ENCODE measurements at regions of chr1 and their contacts with region 1.

Region 1: DNA sequence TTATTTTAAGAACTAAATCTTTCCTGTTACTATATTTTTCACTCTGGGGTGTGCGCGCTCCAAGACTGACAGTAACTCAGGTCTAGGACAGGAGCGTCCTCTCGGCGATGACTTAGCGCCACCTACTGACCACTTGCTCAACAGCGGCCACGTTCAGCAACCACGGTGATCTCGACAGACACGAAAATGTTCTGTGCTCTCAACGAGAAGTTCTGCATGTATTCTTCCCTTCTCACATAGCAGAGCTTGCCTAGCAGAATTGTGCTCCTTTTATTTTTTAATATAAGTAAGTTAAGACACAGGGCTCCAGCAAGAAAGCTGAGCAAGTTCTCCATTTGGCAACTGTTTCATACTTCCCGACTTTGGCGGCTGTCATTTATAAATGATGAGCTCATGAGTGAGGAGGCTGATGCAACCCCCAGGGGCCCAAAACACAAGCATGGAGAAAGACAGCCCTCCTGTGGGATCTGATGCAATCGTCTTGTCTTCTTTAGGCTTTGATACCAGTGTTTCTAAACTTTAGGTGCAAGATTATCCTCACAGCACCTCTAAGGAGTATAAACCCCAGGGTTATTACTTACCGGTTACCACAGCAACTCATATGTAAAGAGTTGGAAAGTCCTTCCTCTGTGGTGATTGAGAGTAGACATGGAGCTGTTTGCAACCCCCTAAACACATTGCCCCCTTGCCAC is 92.6 kb downstream of the HHIPL2 start:
- DNase-seq: peak; percentile 68
- H3K4me3 ChIP-seq: peak overlapping the region; percentile 3 to 5; a peak in 3 of 4 replicates
- H3K27ac ChIP-seq: peak overlapping the region in 1 of 2 experiments; percentile 67; a peak in 2 of 4 replicates
- H3K4me1 ChIP-seq: peaks cover 0 to 16% of the 10 kb centered on the region in 2 experiments; a peak in 2 of 4 replicates
- H3K27me3 ChIP-seq: no peaks in the 10 kb centered on the region
- CTCF ChIP-seq: peak; percentile 98
- EP300 ChIP-seq: no peak
- RAD21 ChIP-seq: peak; percentile 92

Region 2: DNA sequence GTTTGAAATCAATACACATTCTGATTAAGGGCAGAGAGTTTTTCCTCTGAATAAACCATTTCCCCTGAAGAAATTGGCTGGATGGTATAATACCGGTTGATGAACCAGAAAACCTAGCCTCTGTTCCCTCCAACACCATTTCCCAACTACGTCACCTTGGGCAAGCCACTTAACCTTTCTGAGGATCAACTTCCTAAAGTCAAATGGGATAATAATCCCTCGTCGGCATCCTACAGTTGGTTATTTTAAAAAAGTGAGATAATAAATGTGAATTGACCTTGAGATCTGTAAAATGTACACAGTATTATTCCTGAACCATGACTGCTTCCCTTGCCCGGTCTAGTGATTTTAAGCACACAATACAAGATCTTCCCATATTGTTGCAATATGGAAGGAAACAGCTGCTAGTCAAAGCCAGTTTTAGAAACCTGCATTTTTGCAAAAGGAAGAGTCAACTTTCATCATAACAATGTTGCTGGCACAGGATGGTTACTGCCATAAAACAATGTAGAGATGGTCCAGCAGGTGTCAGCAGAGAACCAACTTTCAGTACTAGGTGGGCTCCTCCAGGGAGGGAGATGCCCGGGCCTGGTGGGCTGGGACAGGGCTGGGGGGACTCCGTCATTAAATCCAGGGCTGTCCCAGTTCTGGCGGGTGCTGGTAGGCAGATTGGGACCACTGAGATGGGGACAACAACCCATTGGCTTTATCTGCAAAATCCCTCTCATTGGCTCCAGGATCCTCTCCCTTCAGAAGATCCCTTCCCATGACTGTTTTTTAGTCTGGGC is 1581.3 kb before region 1 on chr1:
- CTCF ChIA-PET with region 1: interaction called, 10 read pairs
- POLR2A ChIA-PET with region 1: no interaction called
- DNase-seq: peak; percentile 75
- H3K4me3 ChIP-seq: no peak overlapping the region; a peak in 1 of 4 replicates
- H3K27ac ChIP-seq: peak overlapping the region in 1 of 2 experiments; percentile 35; a peak in 2 of 4 replicates
- H3K4me1 ChIP-seq: peaks cover 0 to 11% of the 10 kb centered on the region in 2 experiments; a peak in 1 of 4 replicates
- H3K27me3 ChIP-seq: no peaks in the 10 kb centered on the region
- CTCF ChIP-seq: peak; percentile 88
- EP300 ChIP-seq: no peak
- RAD21 ChIP-seq: peak; percentile 92

Region 3: GRCh38 chr1:221478050-221478949 is 977.0 kb before region 1 on chr1:
- CTCF ChIA-PET with region 1: interaction called, 77 read pairs
- POLR2A ChIA-PET with region 1: no interaction called
- DNase-seq: peak; percentile 58
- H3K4me3 ChIP-seq: peak overlapping the region in 1 of 2 experiments; percentile 4; a peak in 1 of 4 replicates
- H3K27ac ChIP-seq: peak overlapping the region in 1 of 2 experiments; percentile 76; a peak in 2 of 4 replicates
- H3K4me1 ChIP-seq: peaks cover 0 to 14% of the 10 kb centered on the region in 2 experiments; a peak in 2 of 4 replicates
- H3K27me3 ChIP-seq: no peaks in the 10 kb centered on the region
- CTCF ChIP-seq: peak; percentile 87
- EP300 ChIP-seq: peak in 1 of 2 experiments; percentile 48; a peak in 2 of 4 replicates
- RAD21 ChIP-seq: peak; percentile 93

Region 4: GRCh38 chr1:222049176-222049575 is 406.2 kb before region 1 on chr1:
- CTCF ChIA-PET with region 1: interaction called, 14 read pairs
- POLR2A ChIA-PET with region 1: no interaction called
- DNase-seq: no peak
- H3K4me3 ChIP-seq: no peak overlapping the region
- H3K27ac ChIP-seq: peak overlapping the region in 1 of 2 experiments; percentile 71; a peak in 2 of 4 replicates
- H3K4me1 ChIP-seq: peaks cover 5 to 30% of the 10 kb centered on the region in 2 experiments; a peak in 3 of 4 replicates
- H3K27me3 ChIP-seq: no peaks in the 10 kb centered on the region
- CTCF ChIP-seq: no peak
- EP300 ChIP-seq: no peak
- RAD21 ChIP-seq: no peak

Region 5: GRCh38 chr1:222229672-222230312 is 225.5 kb before region 1 on chr1:
- CTCF ChIA-PET with region 1: interaction called, 10 read pairs
- POLR2A ChIA-PET with region 1: no interaction called
- DNase-seq: peak; percentile 9
- H3K4me3 ChIP-seq: no peak overlapping the region
- H3K27ac ChIP-seq: no peak overlapping the region
- H3K4me1 ChIP-seq: peaks cover 0 to 6% of the 10 kb centered on the region in 2 experiments; a peak in 1 of 4 replicates
- H3K27me3 ChIP-seq: no peaks in the 10 kb centered on the region
- CTCF ChIP-seq: no peak
- EP300 ChIP-seq: no peak
- RAD21 ChIP-seq: no peak

Region 6: GRCh38 chr1:222335586-222335985 is 119.7 kb before region 1 on chr1:
- CTCF ChIA-PET with region 1: no interaction called
- POLR2A ChIA-PET with region 1: no interaction called
- DNase-seq: no peak
- H3K4me3 ChIP-seq: no peak overlapping the region
- H3K27ac ChIP-seq: no peak overlapping the region
- H3K4me1 ChIP-seq: no peaks in the 10 kb centered on the region
- H3K27me3 ChIP-seq: no peaks in the 10 kb centered on the region
- CTCF ChIP-seq: no peak
- EP300 ChIP-seq: no peak
- RAD21 ChIP-seq: no peak

Region 7: DNA sequence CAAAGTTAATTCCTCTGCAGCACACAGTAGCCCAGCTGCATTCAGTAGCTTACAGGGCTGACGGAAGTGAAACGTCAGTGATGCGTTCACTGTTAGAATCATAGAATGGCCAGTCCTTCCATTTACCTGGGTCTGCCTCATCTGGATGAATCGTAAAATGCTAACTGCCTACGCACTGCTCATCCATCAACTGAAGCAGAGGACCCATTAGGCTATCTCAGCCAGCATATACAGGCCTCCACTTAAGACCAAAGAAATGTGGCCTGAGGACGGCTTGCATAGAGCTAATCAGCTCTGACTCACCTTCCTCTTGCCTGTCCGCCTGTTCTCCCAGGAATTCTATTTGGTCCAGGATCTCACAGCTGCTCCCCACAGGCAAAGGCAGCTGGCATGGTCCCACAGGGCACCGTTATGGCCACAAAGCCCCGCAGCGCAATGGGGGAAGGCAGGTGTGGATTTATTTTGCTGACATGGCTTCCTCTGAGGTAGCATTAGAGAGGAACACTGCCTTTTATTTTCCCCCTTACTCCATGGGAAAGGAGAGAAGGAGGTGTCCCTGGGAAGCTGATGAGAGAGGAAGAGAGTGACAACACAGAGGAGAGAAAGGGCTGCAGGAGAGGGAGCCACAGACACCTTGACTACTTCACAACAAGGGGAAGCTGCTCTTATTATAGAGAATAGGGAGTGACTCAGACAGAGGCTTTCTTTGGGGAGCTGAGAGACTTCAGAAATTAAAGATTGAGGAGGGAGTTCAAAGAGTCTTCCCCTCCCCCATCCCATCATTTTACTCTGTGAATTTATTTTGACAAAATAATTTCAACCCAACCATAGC is 85.0 kb before region 1 on chr1:
- CTCF ChIA-PET with region 1: no interaction called
- POLR2A ChIA-PET with region 1: no interaction called
- DNase-seq: no peak
- H3K4me3 ChIP-seq: no peak overlapping the region; a peak in 1 of 4 replicates
- H3K27ac ChIP-seq: peak overlapping the region in 1 of 2 experiments; percentile 58; a peak in 2 of 4 replicates
- H3K4me1 ChIP-seq: peaks cover 0 to 9% of the 10 kb centered on the region in 2 experiments; a peak in 3 of 4 replicates
- H3K27me3 ChIP-seq: no peaks in the 10 kb centered on the region
- CTCF ChIP-seq: no peak
- EP300 ChIP-seq: no peak
- RAD21 ChIP-seq: no peak

Region 8: GRCh38 chr1:222441066-222441465 is 14.3 kb before region 1 on chr1:
- CTCF ChIA-PET with region 1: interaction called, 32 read pairs
- POLR2A ChIA-PET with region 1: no interaction called
- DNase-seq: no peak
- H3K4me3 ChIP-seq: no peak overlapping the region
- H3K27ac ChIP-seq: no peak overlapping the region
- H3K4me1 ChIP-seq: no peaks in the 10 kb centered on the region
- H3K27me3 ChIP-seq: peaks cover 5% of the 10 kb centered on the region; the same call in 1 of the 2 replicates
- CTCF ChIP-seq: no peak
- EP300 ChIP-seq: no peak
- RAD21 ChIP-seq: no peak

Region 9: GRCh38 chr1:222786121-222786520 is 330.8 kb after region 1 on chr1:
- CTCF ChIA-PET with region 1: no interaction called
- POLR2A ChIA-PET with region 1: no interaction called
- DNase-seq: no peak
- H3K4me3 ChIP-seq: no peak overlapping the region
- H3K27ac ChIP-seq: no peak overlapping the region
- H3K4me1 ChIP-seq: no peaks in the 10 kb centered on the region; a peak in 1 of 4 replicates
- H3K27me3 ChIP-seq: peaks cover 8% of the 10 kb centered on the region; the same call in 1 of the 2 replicates
- CTCF ChIP-seq: no peak
- EP300 ChIP-seq: no peak
- RAD21 ChIP-seq: no peak

Measured in SK-N-SH (cell line).